ENCODE measurements at regions of chr6 and their contacts with region 1.

Region 1: GRCh38 chr6:101178748-101179147 is 214.8 kb upstream of the GRIK2 start:
- DNase-seq: no peak
- H3K4me3 ChIP-seq: no peak overlapping the region
- H3K27ac ChIP-seq: no peak overlapping the region
- H3K4me1 ChIP-seq: no peaks in the 10 kb centered on the region
- H3K27me3 ChIP-seq: no peaks in the 10 kb centered on the region
- CTCF ChIP-seq: no peak
- POLR2A ChIP-seq: no peak

Region 2: GRCh38 chr6:101125380-101125971 is 53.3 kb before region 1 on chr6:
- intact Hi-C with region 1: no loop called
- DNase-seq: no peak
- H3K4me3 ChIP-seq: no peak overlapping the region
- H3K27ac ChIP-seq: no peak overlapping the region
- H3K4me1 ChIP-seq: no peaks in the 10 kb centered on the region
- H3K27me3 ChIP-seq: no peaks in the 10 kb centered on the region
- CTCF ChIP-seq: no peak
- POLR2A ChIP-seq: no peak

Region 3: GRCh38 chr6:101163611-101164010 is 15.1 kb before region 1 on chr6:
- intact Hi-C with region 1: loop called (anchors 1 kb)
- DNase-seq: no peak
- H3K4me3 ChIP-seq: no peak overlapping the region
- H3K27ac ChIP-seq: no peak overlapping the region
- H3K4me1 ChIP-seq: no peaks in the 10 kb centered on the region
- H3K27me3 ChIP-seq: no peaks in the 10 kb centered on the region
- CTCF ChIP-seq: no peak
- POLR2A ChIP-seq: no peak

Region 4: GRCh38 chr6:101241442-101241841 is 62.7 kb after region 1 on chr6:
- intact Hi-C with region 1: no loop called
- DNase-seq: no peak
- H3K4me3 ChIP-seq: no peak overlapping the region
- H3K27ac ChIP-seq: no peak overlapping the region
- H3K4me1 ChIP-seq: no peaks in the 10 kb centered on the region
- H3K27me3 ChIP-seq: no peaks in the 10 kb centered on the region
- CTCF ChIP-seq: no peak
- POLR2A ChIP-seq: no peak

Region 5: DNA sequence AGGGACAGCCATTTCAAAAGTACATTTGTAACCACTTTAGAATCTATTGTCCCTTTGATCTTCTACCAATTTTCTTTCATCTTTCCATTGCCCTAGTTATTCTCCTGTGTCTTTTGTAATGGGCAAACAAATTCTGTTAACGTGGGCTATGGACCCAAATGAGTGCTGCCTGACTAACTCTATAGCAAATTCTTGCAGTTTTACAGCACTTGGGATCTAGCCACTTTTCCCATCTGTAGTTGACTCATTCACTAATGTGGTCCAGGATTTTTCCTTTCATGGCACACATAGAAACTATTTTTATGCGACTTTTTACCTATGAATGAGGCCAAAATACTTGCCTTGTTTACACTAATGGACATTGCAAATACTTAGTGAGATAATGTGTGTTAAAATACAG is 266.8 kb after region 1 on chr6:
- intact Hi-C with region 1: no loop called
- DNase-seq: no peak
- H3K4me3 ChIP-seq: no peak overlapping the region
- H3K27ac ChIP-seq: no peak overlapping the region
- H3K4me1 ChIP-seq: no peaks in the 10 kb centered on the region
- H3K27me3 ChIP-seq: no peaks in the 10 kb centered on the region
- CTCF ChIP-seq: no peak
- POLR2A ChIP-seq: no peak